Mammary epithelial cell (primary cell): ENCODE measurements at regions of chr7 and their contacts with region 1.

Region 1: GRCh38 chr7:111730476-111731300 is 168.4 kb upstream of the IMMP2L start:
- DNase-seq: peak; percentile 21
- H3K4me3 ChIP-seq: no peak overlapping the region
- H3K27ac ChIP-seq: no peak overlapping the region
- H3K4me1 ChIP-seq: no peaks in the 10 kb centered on the region
- H3K27me3 ChIP-seq: no peaks in the 10 kb centered on the region
- CTCF ChIP-seq: peak; percentile 71 to 75

Region 2: DNA sequence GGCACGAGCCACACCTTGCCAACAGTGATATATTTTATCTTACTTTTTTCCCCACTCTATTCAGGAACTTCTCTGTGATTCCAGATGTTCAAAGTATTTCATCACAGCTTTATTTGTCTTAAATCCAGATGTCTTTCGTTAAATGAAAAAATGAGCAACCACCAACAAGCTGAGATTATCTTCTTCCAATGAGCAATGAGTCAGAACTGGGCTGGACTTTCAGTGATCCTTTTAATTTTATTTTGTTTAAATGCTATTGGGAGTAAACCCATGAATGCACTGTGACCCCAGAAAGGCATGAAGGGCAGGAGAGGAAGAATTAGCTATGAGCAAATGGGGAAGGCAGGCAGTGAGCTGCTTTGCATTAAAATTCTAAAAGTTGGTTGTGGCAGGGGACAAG is 90.8 kb before region 1 on chr7:
- CTCF ChIA-PET with region 1: no interaction called
- dilution Hi-C with region 1: loop called (anchors 5 kb)
- in situ Hi-C with region 1: no loop called
- intact Hi-C with region 1: loop called (anchors 1 kb)
- DNase-seq: no peak
- H3K4me3 ChIP-seq: no peak overlapping the region
- H3K27ac ChIP-seq: no peak overlapping the region
- H3K4me1 ChIP-seq: no peaks in the 10 kb centered on the region
- H3K27me3 ChIP-seq: no peaks in the 10 kb centered on the region
- CTCF ChIP-seq: no peak

Region 3: DNA sequence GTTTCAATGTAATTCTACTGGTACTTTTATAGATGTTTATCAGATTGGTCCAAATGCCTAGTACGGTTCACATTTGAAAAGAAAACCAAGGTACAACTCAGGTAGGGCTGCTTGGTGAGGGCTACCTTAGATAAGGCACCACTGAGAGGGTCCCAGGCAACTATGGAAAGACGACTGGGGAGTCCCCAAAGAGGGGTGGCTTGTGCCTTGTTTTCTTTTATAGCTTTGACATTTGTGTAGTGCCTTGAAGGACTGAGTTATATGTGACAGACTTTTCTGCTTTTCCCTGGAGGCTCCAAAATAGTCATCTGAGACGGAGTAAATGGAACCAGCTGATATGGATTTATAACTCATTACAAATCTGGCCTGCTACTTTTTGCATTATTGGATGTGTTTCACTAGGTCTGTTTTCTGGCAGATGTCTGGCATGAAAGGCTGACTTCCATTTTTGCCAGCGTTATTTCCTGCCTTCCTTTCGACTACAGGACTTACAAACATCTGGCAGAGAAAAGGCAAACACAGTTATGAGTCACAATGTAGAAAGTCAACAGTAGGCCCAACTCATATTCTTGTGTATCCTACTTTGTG is 80.2 kb before region 1 on chr7:
- CTCF ChIA-PET with region 1: no interaction called
- dilution Hi-C with region 1: loop called (anchors 5 kb)
- in situ Hi-C with region 1: no loop called
- intact Hi-C with region 1: no loop called
- DNase-seq: peak; percentile 14
- H3K4me3 ChIP-seq: no peak overlapping the region
- H3K27ac ChIP-seq: no peak overlapping the region
- H3K4me1 ChIP-seq: no peaks in the 10 kb centered on the region
- H3K27me3 ChIP-seq: no peaks in the 10 kb centered on the region
- CTCF ChIP-seq: no peak